Caco-2 (cell line): ENCODE measurements at regions of chr4 and their contacts with region 1.

Region 1: GRCh38 chr4:54144199-54144598 is 44.2 kb downstream of the GSX2 start:
- DNase-seq: no peak
- H3K4me3 ChIP-seq: no peak overlapping the region
- H3K4me3 Mint-ChIP-seq: no peak overlapping the region
- H3K27ac Mint-ChIP-seq: no peak overlapping the region
- H3K4me1 ChIP-seq: peaks cover 8% of the 10 kb centered on the region
- H3K4me1 Mint-ChIP-seq: peaks cover 16% of the 10 kb centered on the region
- H3K27me3 ChIP-seq: no peaks in the 10 kb centered on the region
- H3K27me3 Mint-ChIP-seq: no peaks in the 10 kb centered on the region
- CTCF ChIP-seq: no peak

Region 2: DNA sequence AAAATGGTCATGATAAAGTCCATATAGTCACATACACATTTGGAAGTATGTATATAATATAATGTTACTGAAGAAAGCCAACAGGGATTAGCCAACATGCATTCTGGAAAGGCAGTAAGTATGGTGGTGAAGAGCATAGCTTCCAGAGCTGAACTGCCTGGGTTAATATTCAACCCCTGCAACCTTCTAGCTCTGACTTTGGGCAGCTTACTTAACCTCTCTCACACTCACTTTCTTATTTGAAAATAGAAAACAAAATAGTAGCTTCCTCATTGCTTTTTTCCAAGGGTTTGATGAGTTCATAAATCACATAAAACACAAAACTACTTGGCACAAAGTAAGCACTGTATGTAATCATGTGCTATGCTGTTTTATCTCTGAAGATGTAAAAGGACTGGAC is 296.2 kb before region 1 on chr4:
- CTCF ChIA-PET with region 1: no interaction called
- POLR2A ChIA-PET with region 1: no interaction called
- intact Hi-C with region 1: no loop called
- DNase-seq: peak in 1 of 2 experiments; percentile 10
- H3K4me3 ChIP-seq: no peak overlapping the region
- H3K4me3 Mint-ChIP-seq: no peak overlapping the region
- H3K27ac Mint-ChIP-seq: no peak overlapping the region
- H3K4me1 ChIP-seq: no peaks in the 10 kb centered on the region
- H3K4me1 Mint-ChIP-seq: peaks cover 13% of the 10 kb centered on the region
- H3K27me3 ChIP-seq: no peaks in the 10 kb centered on the region
- H3K27me3 Mint-ChIP-seq: no peaks in the 10 kb centered on the region
- CTCF ChIP-seq: no peak

Region 3: GRCh38 chr4:54050214-54050904 is 93.8 kb before region 1 on chr4:
- CTCF ChIA-PET with region 1: no interaction called
- POLR2A ChIA-PET with region 1: interaction called, 9 read pairs
- intact Hi-C with region 1: loop called (anchors 1 kb)
- DNase-seq: peak in 1 of 2 experiments; percentile 33
- H3K4me3 ChIP-seq: no peak overlapping the region
- H3K4me3 Mint-ChIP-seq: peak overlapping the region; percentile 10
- H3K27ac Mint-ChIP-seq: peak overlapping the region; percentile 90
- H3K4me1 ChIP-seq: peaks cover 45% of the 10 kb centered on the region
- H3K4me1 Mint-ChIP-seq: peaks cover 40% of the 10 kb centered on the region
- H3K27me3 ChIP-seq: no peaks in the 10 kb centered on the region
- H3K27me3 Mint-ChIP-seq: no peaks in the 10 kb centered on the region
- CTCF ChIP-seq: no peak

Region 4: DNA sequence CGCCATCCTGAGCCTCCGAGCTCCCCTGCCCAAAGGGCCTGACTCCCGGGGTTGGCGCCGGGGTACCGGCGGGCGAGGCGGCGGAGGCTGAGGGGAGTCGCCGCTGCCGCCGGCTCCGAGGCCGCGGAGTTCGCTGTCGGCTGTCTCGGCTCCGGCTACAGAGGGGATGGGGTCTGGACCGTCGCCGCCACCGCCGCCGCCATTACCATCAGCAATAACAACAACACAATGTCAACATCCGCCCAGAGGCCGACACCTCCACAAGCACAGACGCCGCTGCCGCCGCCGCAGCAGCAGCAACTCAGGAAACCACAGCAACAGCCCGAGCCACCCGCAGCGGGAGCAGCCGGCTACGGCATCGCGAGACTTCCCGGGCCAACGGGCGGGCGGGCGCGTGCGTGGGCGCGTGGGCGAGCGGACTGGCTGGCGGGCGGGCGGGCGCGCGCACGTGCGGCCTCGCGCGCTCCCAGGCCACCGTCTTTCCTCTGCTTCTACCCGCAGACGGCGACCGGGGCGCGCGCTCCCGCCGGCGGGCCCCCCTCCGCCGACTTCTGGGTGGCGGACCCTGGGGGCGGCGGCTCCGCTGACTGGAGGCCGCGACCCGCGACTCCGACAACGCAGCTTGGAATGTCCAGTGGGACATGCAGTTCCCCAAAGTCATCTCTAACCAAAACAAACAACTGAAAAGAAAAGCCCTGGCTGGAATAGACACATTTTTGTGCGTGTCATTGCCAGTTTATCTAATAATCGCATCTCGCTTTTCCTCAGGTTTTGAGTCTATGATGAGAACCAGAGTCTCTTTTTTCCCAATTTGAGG is 79.7 kb before region 1 on chr4 and contains the start of gene CHIC2:
- CTCF ChIA-PET with region 1: no interaction called
- POLR2A ChIA-PET with region 1: no interaction called
- intact Hi-C with region 1: loop called (anchors 1 kb)
- DNase-seq: peak; percentile 94 to 96
- H3K4me3 ChIP-seq: peak within 1 kb of the TSS; percentile 92
- H3K4me3 Mint-ChIP-seq: peak within 1 kb of the TSS; percentile 89
- H3K27ac Mint-ChIP-seq: peak within 1 kb of the TSS; percentile 20
- H3K4me1 ChIP-seq: peaks cover 25% of the 10 kb centered on the region
- H3K4me1 Mint-ChIP-seq: peaks cover 40% of the 10 kb centered on the region
- H3K27me3 ChIP-seq: no peaks in the 10 kb centered on the region
- H3K27me3 Mint-ChIP-seq: no peaks in the 10 kb centered on the region
- CTCF ChIP-seq: no peak
- total RNA-seq, gene CHIC2: 24.9 and 30.0 TPM in 2 replicates

Region 5: DNA sequence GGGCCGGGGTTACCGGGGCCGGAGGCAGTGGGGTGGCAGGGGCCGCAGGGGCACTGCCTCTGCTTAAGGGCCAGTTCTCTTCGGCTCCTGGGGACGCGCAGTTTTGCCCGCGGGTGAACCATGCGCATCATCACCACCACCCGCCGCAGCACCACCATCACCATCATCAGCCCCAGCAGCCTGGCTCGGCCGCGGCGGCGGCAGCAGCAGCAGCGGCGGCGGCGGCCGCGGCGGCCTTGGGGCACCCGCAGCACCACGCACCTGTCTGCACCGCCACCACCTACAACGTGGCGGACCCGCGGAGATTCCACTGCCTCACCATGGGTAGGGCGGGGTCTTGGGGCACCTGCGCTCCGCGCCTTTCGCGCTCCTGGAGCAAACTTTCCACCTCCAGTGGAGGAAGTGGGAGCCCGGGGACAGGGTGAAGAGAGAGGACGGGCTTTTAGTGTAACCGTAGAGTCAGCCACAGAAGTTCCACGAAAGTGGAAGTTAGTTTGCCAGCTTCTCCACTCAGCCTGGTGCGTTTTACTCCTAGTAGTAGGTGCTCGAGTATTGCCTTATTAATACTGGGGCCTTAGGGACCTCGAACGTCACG is 43.5 kb before region 1 on chr4:
- CTCF ChIA-PET with region 1: no interaction called
- POLR2A ChIA-PET with region 1: no interaction called
- intact Hi-C with region 1: loop called (anchors 1 kb)
- DNase-seq: peak in 1 of 2 experiments; percentile 29
- H3K4me3 ChIP-seq: peak overlapping the region; percentile 36
- H3K4me3 Mint-ChIP-seq: peak overlapping the region; percentile 78
- H3K27ac Mint-ChIP-seq: no peak overlapping the region
- H3K4me1 ChIP-seq: peaks cover 5% of the 10 kb centered on the region; the same call in 1 of the 2 replicates
- H3K4me1 Mint-ChIP-seq: no peaks in the 10 kb centered on the region
- H3K27me3 ChIP-seq: no peaks in the 10 kb centered on the region
- H3K27me3 Mint-ChIP-seq: peaks cover 13% of the 10 kb centered on the region
- CTCF ChIP-seq: no peak

Region 6: DNA sequence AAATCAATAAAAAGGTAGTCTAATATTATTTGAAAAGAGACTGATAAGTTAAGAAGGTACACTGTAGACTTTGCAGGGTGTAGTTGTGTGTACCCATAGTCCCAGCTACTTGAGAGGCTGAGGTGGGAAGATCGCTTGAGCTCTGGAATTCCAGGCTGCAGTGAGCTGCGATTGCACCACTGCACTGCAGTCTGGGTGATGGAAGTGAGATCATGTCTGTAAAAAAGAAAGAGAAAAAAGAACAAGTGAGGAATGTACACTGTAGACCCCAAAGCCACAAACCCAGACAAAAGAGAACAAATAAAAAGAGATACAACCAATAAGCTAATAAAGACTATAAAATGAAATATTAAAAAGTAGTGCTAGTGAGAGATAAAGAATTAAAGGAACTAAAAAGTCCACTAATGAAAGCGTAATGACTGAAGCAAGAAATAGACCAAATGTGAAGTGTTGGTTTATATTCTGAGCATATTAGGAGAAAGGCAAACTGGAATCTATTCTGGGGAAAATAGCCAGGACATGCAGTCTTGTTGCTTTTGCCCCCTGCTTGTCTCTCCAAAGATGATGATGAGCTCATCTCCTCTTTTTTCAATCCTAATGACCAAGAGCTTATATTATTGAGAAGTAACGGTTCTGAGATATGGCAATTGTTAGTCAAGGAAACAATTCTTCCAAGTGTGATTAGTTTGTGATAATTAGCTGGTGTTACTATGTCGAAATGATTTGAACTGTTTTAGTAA is 25.2 kb before region 1 on chr4:
- CTCF ChIA-PET with region 1: no interaction called
- POLR2A ChIA-PET with region 1: no interaction called
- intact Hi-C with region 1: loop called (anchors 2 kb)
- DNase-seq: peak in 1 of 2 experiments; percentile 16
- H3K4me3 ChIP-seq: no peak overlapping the region
- H3K4me3 Mint-ChIP-seq: no peak overlapping the region
- H3K27ac Mint-ChIP-seq: no peak overlapping the region
- H3K4me1 ChIP-seq: peaks cover 21% of the 10 kb centered on the region; the same call in 1 of the 2 replicates
- H3K4me1 Mint-ChIP-seq: peaks cover 7% of the 10 kb centered on the region
- H3K27me3 ChIP-seq: no peaks in the 10 kb centered on the region
- H3K27me3 Mint-ChIP-seq: no peaks in the 10 kb centered on the region
- CTCF ChIP-seq: no peak

Region 7: GRCh38 chr4:54187148-54187547 is 42.9 kb after region 1 on chr4:
- CTCF ChIA-PET with region 1: no interaction called
- POLR2A ChIA-PET with region 1: no interaction called
- intact Hi-C with region 1: loop called (anchors 1 kb)
- DNase-seq: no peak
- H3K4me3 ChIP-seq: no peak overlapping the region
- H3K4me3 Mint-ChIP-seq: no peak overlapping the region
- H3K27ac Mint-ChIP-seq: peak overlapping the region; percentile 48
- H3K4me1 ChIP-seq: peaks cover 18% of the 10 kb centered on the region
- H3K4me1 Mint-ChIP-seq: peaks cover 7% of the 10 kb centered on the region
- H3K27me3 ChIP-seq: no peaks in the 10 kb centered on the region
- H3K27me3 Mint-ChIP-seq: no peaks in the 10 kb centered on the region
- CTCF ChIP-seq: no peak